BJ (cell line): ENCODE measurements at regions of chr16 and their contacts with region 1.

Region 1: DNA sequence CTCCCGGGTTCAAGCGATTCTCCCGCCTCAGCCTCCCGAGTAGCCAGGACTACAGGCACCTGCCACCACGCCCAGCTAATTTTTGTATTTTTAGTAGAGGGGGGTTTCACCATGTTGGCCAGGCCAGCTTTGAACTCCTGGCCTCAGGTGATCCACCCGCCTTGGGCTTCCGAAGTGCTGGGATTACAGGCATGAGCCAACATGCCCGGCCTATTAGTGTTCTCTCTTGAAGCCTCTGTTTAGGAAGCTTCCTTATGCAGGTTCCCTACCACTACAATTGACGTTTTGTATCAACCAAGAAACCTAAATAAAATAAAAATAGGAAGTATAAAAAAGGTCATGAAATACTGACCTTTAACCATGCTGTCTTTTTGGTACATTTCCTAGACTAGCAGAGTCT is 16.0 kb downstream of the CHST5 start:
- DNase-seq: no peak
- H3K4me3 ChIP-seq: no peak overlapping the region
- H3K27me3 ChIP-seq: no peaks in the 10 kb centered on the region
- CTCF ChIP-seq: no peak

Region 2: DNA sequence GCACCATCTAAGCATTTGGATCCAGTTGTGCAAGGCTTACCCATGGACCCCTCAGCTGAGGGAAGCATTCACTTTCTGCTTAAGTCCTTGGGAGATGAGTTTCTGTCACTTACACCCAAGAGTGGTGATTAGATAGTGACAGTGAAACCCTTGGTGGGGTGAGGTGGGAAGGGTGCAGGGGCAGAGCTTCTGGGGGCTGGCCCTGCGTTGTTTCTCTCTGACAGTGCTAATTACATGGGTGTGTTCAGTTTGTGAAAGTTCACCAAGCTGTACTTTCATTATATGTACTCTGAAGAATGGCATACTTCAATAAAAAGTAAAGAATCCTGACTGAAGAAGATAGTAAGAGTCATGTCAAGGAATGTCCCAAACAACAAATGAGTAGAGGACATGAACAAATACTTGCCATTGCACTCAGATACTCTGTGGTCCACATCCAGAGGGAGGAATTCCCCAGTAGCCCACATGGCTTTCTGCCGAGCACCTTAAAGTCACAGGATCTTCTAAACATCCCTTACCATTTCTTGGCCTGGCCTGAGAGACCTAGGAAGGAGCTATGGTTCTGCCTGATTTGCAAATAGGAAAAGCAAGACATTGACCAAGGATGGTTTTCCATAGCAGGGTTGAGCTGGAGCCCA is 33.1 kb before region 1 on chr16:
- CTCF ChIA-PET with region 1: interaction called, 11 read pairs
- POLR2A ChIA-PET with region 1: no interaction called
- DNase-seq: no peak
- H3K4me3 ChIP-seq: no peak overlapping the region
- H3K27me3 ChIP-seq: no peaks in the 10 kb centered on the region; the same call in 1 of the 2 replicates
- CTCF ChIP-seq: no peak

Region 3: GRCh38 chr16:75550211-75550662 is 30.4 kb after region 1 on chr16:
- CTCF ChIA-PET with region 1: interaction called, 11 read pairs
- POLR2A ChIA-PET with region 1: no interaction called
- DNase-seq: no peak
- H3K4me3 ChIP-seq: no peak overlapping the region
- H3K27me3 ChIP-seq: no peaks in the 10 kb centered on the region
- CTCF ChIP-seq: peak; percentile 27

Region 4: GRCh38 chr16:75614066-75614897 is 94.4 kb after region 1 on chr16:
- CTCF ChIA-PET with region 1: interaction called, 20 read pairs
- POLR2A ChIA-PET with region 1: no interaction called
- DNase-seq: peak; percentile 22
- H3K4me3 ChIP-seq: no peak overlapping the region
- H3K27me3 ChIP-seq: no peaks in the 10 kb centered on the region
- CTCF ChIP-seq: no peak

Region 5: DNA sequence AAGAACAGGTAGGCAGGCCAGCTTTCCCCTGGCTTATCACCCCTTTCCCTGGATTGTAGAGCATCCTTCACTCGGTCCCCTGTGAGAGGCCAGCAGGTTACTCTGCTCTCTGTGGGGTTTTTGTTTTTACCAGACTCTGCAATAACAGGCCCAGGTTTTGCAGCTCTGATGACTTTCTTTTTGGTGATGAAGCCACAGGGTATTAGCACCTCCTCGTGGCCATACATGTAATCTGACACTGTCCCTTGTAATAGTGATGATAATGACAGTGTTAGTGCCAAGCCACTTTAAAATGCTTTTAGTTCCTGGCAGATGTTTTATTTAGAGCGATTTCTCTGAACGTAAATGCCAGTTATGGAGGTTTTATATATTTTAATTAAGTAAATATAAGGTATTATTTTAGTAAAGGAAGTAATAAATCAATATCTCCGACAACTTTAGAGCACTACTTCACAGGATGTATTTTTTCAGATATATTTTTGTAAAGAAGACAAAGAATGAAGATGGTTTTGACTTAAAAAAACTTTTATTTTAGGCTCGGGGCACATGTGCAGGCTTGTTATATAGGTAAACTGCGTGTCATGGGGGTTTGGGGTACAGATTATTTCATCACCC is 244.4 kb after region 1 on chr16:
- CTCF ChIA-PET with region 1: interaction called, 10 read pairs
- POLR2A ChIA-PET with region 1: no interaction called
- DNase-seq: no peak
- H3K4me3 ChIP-seq: no peak overlapping the region
- H3K27me3 ChIP-seq: no peaks in the 10 kb centered on the region
- CTCF ChIP-seq: peak; percentile 80